ENCODE measurements at regions of chr1 and their contacts with region 1.

Region 1: GRCh38 chr1:19651141-19651737 is 7.1 kb downstream of the NBL1 start:
- DNase-seq: no peak
- H3K4me3 ChIP-seq: no peak overlapping the region
- H3K27ac ChIP-seq: no peak overlapping the region
- H3K4me1 ChIP-seq: peaks cover 23% of the 10 kb centered on the region
- H3K27me3 ChIP-seq: no peaks in the 10 kb centered on the region
- CTCF ChIP-seq: peak; percentile 44

Region 2: GRCh38 chr1:19251305-19252196 is 399.7 kb before region 1 on chr1 and contains the starts of genes EMC1 and MRTO4:
- CTCF ChIA-PET with region 1: no interaction called
- POLR2A ChIA-PET with region 1: no interaction called
- intact Hi-C with region 1: loop called (anchors 5 kb)
- DNase-seq: peak; percentile 60 to 85
- H3K4me3 ChIP-seq: peak within 1 kb of the TSS; percentile 82
- H3K27ac ChIP-seq: peak within 1 kb of the TSS; percentile 70
- H3K4me1 ChIP-seq: peaks cover 16% of the 10 kb centered on the region
- H3K27me3 ChIP-seq: no peaks in the 10 kb centered on the region
- CTCF ChIP-seq: no peak
- total RNA-seq, gene EMC1: 40.7 and 45.8 TPM in 2 replicates
- total RNA-seq, gene MRTO4: 29.0 and 32.4 TPM in 2 replicates

Region 3: DNA sequence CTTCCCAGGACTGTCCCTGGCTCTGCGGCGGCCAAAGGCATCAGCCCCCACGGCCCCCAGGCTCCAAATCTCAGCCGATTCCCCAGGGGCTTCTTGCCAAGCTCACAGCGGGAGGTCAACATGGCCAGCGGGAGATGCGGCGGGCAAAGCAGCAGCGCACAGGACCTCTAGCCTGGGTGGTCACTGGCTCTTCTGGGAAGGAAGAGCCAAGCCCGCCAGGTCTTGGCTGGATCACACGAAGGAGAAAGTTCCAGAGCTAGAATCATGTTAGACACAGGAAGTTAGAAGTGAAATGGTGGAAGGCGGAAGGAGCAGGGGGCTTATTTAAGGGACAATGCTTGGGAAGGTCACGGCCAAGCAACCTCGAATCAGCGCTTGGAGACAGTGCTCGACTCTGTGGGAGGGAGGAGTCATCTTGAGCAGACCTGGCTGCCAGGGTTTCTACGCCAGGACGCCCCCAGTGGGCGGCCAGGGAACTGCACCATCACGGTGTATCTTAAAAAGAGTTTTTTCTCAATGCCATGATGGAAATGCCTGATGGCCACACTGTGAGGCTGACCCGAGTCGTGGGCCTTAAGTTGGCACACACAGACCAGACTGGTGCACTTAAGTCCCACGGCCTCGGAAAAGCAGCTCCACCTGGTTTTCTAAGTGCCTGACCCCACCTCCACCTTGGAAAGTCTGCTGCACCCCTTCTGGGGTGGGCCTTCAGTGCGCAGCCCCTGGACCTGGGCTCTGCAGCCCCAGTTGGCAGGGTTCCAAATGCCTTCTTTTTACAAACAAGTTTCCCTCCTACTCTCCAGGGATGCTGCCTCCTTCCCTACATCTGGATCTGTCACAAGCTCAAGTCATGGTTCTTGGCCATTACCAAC is 309.8 kb before region 1 on chr1:
- CTCF ChIA-PET with region 1: no interaction called
- POLR2A ChIA-PET with region 1: no interaction called
- intact Hi-C with region 1: loop called (anchors 5 kb)
- DNase-seq: peak; percentile 47 to 69
- H3K4me3 ChIP-seq: no peak overlapping the region
- H3K27ac ChIP-seq: no peak overlapping the region
- H3K4me1 ChIP-seq: peaks cover 8% of the 10 kb centered on the region
- H3K27me3 ChIP-seq: no peaks in the 10 kb centered on the region
- CTCF ChIP-seq: peak; percentile 84

Region 4: GRCh38 chr1:20265250-20265649 is 614.0 kb after region 1 on chr1:
- CTCF ChIA-PET with region 1: no interaction called
- POLR2A ChIA-PET with region 1: no interaction called
- intact Hi-C with region 1: no loop called
- DNase-seq: no peak
- H3K4me3 ChIP-seq: no peak overlapping the region
- H3K27ac ChIP-seq: no peak overlapping the region
- H3K4me1 ChIP-seq: peaks cover 22% of the 10 kb centered on the region
- H3K27me3 ChIP-seq: no peaks in the 10 kb centered on the region
- CTCF ChIP-seq: no peak